ENCODE measurements at regions of chr14 and their contacts with region 1.

Region 1: GRCh38 chr14:55446218-55446654 is 5.8 kb upstream of the TBPL2 start:
- DNase-seq: peak; percentile 65 to 79 (median 76)
- H3K4me3 ChIP-seq: no peak overlapping the region
- H3K27ac ChIP-seq: no peak overlapping the region
- H3K4me1 ChIP-seq: peaks cover 4 to 15% (median 11%) of the 10 kb centered on the region in 4 experiments
- H3K27me3 ChIP-seq: peaks cover 0 to 2% (median 0%) of the 10 kb centered on the region in 5 experiments

Region 2: DNA sequence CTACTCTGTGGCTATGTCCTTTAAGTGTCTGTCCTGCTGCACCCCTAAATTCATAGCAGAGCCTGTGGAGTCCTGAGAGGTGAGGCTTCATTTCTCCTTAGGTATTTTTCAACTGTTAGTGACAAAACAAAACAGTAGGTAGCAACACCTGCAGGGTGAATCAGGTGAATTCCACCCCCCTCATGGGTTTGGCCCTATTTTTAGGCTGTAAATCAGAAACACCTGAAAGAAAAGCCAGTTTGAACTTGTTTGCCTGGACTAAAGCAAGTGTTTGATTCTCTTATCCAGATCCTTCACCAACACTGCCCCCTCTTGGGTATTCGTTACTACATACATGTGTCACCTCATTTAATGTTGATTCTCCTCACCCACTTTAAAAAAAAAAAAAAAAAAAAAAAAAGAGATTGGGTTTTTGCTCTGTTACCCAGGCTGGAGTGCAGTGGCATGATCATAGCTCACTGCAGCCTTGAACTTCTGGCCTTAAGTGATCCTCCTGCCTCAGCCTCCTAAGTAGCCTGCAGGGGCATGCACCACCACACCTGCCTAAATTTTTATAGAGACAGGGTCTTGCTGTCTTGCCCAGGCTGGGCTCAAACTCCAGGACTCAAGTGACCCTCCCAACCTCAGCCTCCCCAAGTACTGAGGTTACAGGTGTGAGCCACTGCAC is 16.1 kb before region 1 on chr14:
- CTCF ChIA-PET with region 1: interaction called, 10 read pairs
- POLR2A ChIA-PET with region 1: no interaction called
- DNase-seq: peak; percentile 75 to 86 (median 83)
- H3K4me3 ChIP-seq: no peak overlapping the region
- H3K27ac ChIP-seq: no peak overlapping the region
- H3K4me1 ChIP-seq: peaks cover 0 to 12% (median 2%) of the 10 kb centered on the region in 4 experiments
- H3K27me3 ChIP-seq: peaks cover 0 to 28% (median 6%) of the 10 kb centered on the region in 5 experiments

Region 3: DNA sequence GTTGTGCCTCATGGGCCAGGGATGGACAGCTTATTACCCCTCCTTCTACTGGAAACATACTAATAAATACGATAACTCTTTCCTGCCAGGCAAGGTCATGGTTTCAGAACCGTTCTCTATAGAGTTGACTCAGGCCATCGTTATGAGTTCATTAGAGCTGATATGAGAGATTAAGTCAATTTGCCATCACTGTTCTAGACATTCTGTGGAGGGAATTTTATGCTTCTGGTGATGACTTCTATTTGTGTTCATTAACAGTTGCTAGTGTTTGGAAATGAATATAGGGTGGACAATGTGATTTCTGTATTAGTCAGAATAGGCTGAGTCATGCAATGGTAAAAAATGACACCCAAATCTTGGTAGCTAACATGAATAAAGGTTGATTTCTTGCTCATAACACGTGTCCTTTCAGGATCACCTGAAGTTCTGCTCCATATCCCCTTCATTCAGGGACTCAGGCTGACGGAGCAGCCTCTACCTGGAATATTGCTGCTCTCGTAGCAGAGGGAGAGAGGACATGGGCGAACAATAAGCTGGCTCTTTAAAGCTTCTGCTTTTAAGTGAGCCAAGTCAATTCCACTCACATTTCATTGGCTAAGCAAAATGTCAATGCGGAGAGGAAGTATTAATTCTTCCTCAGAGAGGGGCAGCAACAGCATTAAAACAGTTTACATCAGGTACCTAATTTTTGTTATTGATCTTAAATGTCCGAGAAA is 12.7 kb after region 1 on chr14:
- CTCF ChIA-PET with region 1: interaction called, 13 read pairs
- POLR2A ChIA-PET with region 1: no interaction called
- DNase-seq: peak in 2 of 3 donors; percentile 36 to 52
- H3K4me3 ChIP-seq: peak overlapping the region in 1 of 7 experiments; percentile 39
- H3K27ac ChIP-seq: no peak overlapping the region
- H3K4me1 ChIP-seq: peaks cover 0 to 10% (median 7%) of the 10 kb centered on the region in 4 experiments
- H3K27me3 ChIP-seq: no peaks in the 10 kb centered on the region

Region 4: DNA sequence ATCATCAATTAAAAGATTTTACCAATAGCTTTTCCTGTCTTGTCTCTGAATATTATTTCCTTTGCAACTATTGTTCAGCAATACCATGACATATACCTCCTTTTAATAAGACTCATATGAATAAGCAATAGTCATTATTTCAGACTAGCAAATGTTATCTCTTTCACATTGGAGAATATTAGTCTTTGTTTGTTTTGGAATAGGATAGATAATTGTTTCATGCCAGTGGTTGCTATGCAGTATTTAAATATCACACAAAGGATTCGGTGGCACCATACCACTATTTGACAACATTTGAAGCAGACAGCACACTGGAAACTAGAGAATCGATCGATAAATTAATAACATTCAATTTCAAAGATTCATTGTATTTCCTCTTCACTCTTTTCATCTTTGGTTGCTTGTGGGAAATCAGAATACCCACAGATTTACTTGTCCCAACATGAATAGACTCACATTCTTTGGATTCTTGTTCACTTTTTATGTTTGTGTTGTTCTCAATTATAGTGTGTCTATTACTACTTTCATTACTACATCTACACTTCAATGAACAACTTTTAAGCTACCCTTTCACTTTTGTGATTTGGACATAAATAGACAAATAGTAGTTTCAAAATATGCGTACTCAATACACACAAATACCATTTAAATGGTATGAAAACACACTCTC is 36.8 kb after region 1 on chr14:
- CTCF ChIA-PET with region 1: no interaction called
- POLR2A ChIA-PET with region 1: no interaction called
- DNase-seq: no peak
- H3K4me3 ChIP-seq: no peak overlapping the region
- H3K27ac ChIP-seq: no peak overlapping the region
- H3K4me1 ChIP-seq: no peaks in the 10 kb centered on the region
- H3K27me3 ChIP-seq: no peaks in the 10 kb centered on the region

Region 5: GRCh38 chr14:55514819-55515490 is 68.7 kb after region 1 on chr14:
- CTCF ChIA-PET with region 1: no interaction called
- POLR2A ChIA-PET with region 1: no interaction called
- DNase-seq: no peak
- H3K4me3 ChIP-seq: no peak overlapping the region
- H3K27ac ChIP-seq: no peak overlapping the region
- H3K4me1 ChIP-seq: no peaks in the 10 kb centered on the region
- H3K27me3 ChIP-seq: no peaks in the 10 kb centered on the region

Region 6: GRCh38 chr14:55938249-55938791 is 492.1 kb after region 1 on chr14:
- CTCF ChIA-PET with region 1: no interaction called
- POLR2A ChIA-PET with region 1: no interaction called
- DNase-seq: no peak
- H3K4me3 ChIP-seq: no peak overlapping the region
- H3K27ac ChIP-seq: no peak overlapping the region
- H3K4me1 ChIP-seq: no peaks in the 10 kb centered on the region
- H3K27me3 ChIP-seq: no peaks in the 10 kb centered on the region